CD8-positive, alpha-beta T cell (primary cell): ENCODE measurements at regions of chr3 and their contacts with region 1.

Region 1: DNA sequence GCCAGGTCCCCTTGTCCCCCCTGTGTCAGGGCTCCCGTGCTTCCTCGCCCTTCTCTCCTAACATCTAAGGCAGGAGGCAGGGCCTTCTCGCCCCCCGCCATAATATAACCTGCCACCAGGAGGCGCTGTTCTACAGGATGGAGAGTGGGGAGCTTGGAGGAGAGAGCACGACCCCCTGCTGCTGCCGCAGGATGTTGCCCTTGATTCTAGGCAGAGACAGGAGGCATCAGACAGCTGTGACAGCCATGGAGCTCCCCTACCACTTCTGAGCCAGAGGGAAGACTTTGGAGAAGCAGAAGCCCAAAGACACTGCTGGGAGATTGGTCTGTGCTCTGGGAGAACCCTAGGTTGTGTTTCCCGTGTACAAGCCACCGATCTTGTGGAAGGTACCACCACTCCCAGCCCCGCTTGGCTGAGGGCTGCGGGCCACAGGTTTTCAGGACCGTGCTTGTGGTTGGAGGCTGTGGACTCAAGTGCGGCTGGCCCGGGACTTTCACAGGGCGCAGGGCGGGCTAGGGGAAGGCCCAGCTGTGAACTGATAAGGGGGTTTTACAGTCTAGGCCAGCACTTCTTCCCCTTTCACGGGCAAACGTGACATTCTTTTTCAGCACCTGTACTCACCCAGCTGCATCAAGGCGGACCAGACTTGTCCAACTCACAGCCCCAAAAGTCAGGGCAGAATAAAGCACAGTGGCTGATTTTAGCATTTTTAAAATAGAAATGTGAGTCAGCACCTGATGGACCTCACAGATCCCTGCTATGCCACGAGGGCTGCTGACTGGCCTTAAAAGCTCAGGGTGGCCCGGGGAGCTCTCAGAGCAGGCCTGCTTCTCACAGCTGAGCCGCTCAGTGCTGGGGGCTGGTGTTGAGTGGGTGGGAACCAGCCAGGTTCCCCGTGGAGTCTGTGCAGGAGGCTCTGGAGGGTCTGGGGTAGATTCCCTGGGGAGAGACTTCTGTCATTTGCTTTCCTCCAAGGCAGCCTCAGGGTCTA is 2.6 kb upstream of the TIGIT start:
- DNase-seq: peak; percentile 86 to 97 (median 93)
- ATAC-seq: peak; percentile 76
- H3K4me3 ChIP-seq: peak overlapping the region in 1 of 2 experiments; percentile 48
- H3K4me3 Mint-ChIP-seq: peak overlapping the region; percentile 80
- H3K27ac ChIP-seq: peak overlapping the region; percentile 60 to 89
- H3K27ac Mint-ChIP-seq: peak overlapping the region; percentile 96
- H3K4me1 ChIP-seq: peaks cover 27% of the 10 kb centered on the region
- H3K4me1 Mint-ChIP-seq: peaks cover 43% of the 10 kb centered on the region
- H3K27me3 ChIP-seq: no peaks in the 10 kb centered on the region
- H3K27me3 Mint-ChIP-seq: no peaks in the 10 kb centered on the region
- CTCF ChIP-seq: peak; percentile 87

Region 2: DNA sequence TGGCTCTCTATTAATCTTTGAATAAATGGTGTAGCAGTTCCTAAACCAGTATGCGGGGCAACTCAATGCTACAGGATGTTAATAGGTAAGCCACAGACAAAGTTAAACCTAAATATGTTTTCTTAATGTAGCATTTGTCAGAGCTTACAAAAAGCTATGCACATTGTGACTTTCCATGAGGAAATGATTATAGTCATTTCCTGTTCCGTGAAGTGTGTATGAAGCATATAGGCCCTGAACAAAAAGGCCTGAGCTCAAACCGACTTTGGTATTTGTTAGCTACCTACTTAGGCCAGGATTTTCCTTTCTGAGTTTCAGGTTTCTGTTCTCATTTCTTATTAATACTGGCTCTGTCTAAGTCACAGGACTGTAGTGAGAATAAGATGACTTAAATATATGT is 68.1 kb before region 1 on chr3:
- CTCF ChIA-PET with region 1: interaction called, 7 read pairs
- POLR2A ChIA-PET with region 1: interaction called, 112 read pairs
- intact Hi-C with region 1: no loop called
- DNase-seq: peak in 2 of 9 experiments; percentile 60 to 83
- ATAC-seq: peak; percentile 70
- H3K4me3 ChIP-seq: no peak overlapping the region
- H3K4me3 Mint-ChIP-seq: no peak overlapping the region
- H3K27ac ChIP-seq: peak overlapping the region; percentile 37 to 78
- H3K27ac Mint-ChIP-seq: peak overlapping the region; percentile 89
- H3K4me1 ChIP-seq: peaks cover 79% of the 10 kb centered on the region
- H3K4me1 Mint-ChIP-seq: peaks cover 89% of the 10 kb centered on the region
- H3K27me3 ChIP-seq: no peaks in the 10 kb centered on the region
- H3K27me3 Mint-ChIP-seq: no peaks in the 10 kb centered on the region
- CTCF ChIP-seq: no peak

Region 3: DNA sequence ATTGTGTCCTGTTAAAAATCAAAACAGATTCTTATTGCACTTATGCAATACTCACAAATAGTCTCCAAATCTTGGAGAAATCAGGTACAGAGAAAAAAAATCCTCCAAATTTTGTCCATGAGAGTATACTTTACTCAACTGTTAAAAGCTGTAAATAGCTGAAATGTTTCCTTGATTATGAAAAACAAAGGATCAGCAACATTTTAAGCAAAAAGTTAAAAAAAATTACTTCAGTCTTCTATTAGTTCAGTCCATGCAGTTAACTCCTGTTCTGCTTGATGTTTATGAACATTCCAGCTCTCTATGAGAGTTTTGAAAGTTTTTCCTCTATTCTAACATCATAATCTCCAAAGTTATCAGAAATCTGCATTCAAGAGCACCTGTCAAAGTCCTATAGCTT is 31.1 kb before region 1 on chr3:
- CTCF ChIA-PET with region 1: no interaction called
- POLR2A ChIA-PET with region 1: no interaction called
- intact Hi-C with region 1: loop called in 1 of 2 experiments (anchors 1 kb)
- DNase-seq: no peak
- ATAC-seq: no peak
- H3K4me3 ChIP-seq: no peak overlapping the region
- H3K4me3 Mint-ChIP-seq: no peak overlapping the region
- H3K27ac ChIP-seq: no peak overlapping the region
- H3K27ac Mint-ChIP-seq: no peak overlapping the region
- H3K4me1 ChIP-seq: no peaks in the 10 kb centered on the region
- H3K4me1 Mint-ChIP-seq: no peaks in the 10 kb centered on the region
- H3K27me3 ChIP-seq: no peaks in the 10 kb centered on the region
- H3K27me3 Mint-ChIP-seq: no peaks in the 10 kb centered on the region
- CTCF ChIP-seq: no peak

Region 4: DNA sequence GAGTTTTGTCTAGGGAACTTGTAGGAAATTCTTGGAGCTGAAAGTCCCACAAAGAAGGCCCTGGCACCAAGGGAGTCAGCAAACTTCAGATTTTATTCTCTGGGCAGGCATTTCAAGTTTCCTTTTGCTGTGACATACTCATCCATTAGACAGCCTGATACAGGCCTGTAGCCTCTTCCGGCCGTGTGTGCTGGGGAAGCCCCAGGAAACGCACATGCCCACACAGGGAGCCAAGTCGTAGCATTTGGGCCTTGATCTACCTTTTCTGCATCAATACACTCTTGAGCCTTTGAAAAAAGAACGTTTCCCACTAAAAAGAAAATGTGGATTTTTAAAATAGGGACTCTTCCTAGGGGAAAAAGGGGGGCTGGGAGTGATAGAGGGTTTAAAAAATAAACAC is 17.6 kb after region 1 on chr3:
- CTCF ChIA-PET with region 1: interaction called, 37 read pairs
- POLR2A ChIA-PET with region 1: interaction called, 14 read pairs
- intact Hi-C with region 1: loop called in 1 of 2 experiments (anchors 2 kb)
- DNase-seq: peak; percentile 14 to 88 (median 51)
- ATAC-seq: peak; percentile 82
- H3K4me3 ChIP-seq: no peak overlapping the region
- H3K4me3 Mint-ChIP-seq: peak overlapping the region; percentile 38
- H3K27ac ChIP-seq: peak overlapping the region; percentile 55 to 91
- H3K27ac Mint-ChIP-seq: peak overlapping the region; percentile 87
- H3K4me1 ChIP-seq: peaks cover 30% of the 10 kb centered on the region
- H3K4me1 Mint-ChIP-seq: peaks cover 56% of the 10 kb centered on the region
- H3K27me3 ChIP-seq: no peaks in the 10 kb centered on the region
- H3K27me3 Mint-ChIP-seq: no peaks in the 10 kb centered on the region
- CTCF ChIP-seq: no peak